Ascending aorta (tissue), 2 donors: ENCODE measurements at regions of chr12 and their contacts with region 1.

Region 1: DNA sequence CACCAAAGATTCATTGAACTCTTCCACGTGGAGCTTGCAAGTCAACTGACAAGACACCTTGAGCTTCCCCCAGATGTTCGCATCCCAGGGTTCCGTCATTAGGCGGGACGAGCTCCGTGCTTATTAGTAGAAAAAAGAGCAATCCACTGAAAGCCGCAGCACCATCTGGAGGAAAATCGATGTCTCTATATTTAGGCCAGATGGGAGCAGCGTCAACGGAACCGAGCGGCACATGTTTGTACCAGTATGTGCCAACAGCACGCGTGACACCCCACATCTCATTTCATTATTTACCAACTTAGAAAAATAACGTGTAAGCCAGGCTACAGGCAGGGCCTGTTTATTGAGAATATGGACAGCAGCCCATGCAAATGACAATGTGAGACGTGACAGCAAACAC is 45.8 kb upstream of the TMEM132D start:
- DNase-seq: no peak
- H3K4me3 ChIP-seq: no peak overlapping the region
- H3K27ac ChIP-seq: no peak overlapping the region
- H3K4me1 ChIP-seq: no peaks in the 10 kb centered on the region
- H3K27me3 ChIP-seq: no peaks in the 10 kb centered on the region
- CTCF ChIP-seq: no peak

Region 2: DNA sequence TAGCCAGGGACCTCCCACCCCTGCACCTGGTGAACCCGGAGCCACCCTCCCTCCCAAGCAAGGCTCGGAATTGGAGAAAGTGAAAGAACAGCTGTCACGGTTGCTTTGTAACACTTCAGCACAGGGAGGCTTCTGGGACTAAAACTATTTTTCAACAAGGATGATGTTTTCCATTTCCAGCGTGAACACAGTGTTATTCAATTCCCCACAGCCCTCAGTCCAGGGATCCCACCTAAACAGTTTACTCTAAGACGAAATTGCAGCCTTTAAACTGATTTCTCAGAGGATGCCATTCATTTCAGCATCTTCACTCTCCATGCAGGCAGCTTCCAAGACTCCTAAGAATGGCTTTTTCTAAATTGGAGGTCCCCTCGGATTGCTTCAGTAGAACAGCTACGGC is 1355.1 kb before region 1 on chr12:
- intact Hi-C with region 1: loop called (anchors 5 kb)
- DNase-seq: no peak
- H3K4me3 ChIP-seq: no peak overlapping the region
- H3K27ac ChIP-seq: no peak overlapping the region
- H3K4me1 ChIP-seq: no peaks in the 10 kb centered on the region
- H3K27me3 ChIP-seq: no peaks in the 10 kb centered on the region
- CTCF ChIP-seq: no peak